Mucosa of descending colon (tissue), 3 donors: ENCODE measurements at regions of chr17 and their contacts with region 1.

Region 1: GRCh38 chr17:62968445-62968923 is 2.4 kb downstream of the TANC2 start:
- DNase-seq: peak in 1 of 3 donors; percentile 64
- ATAC-seq: peak; percentile 80
- H3K4me3 ChIP-seq: no peak overlapping the region
- H3K4me1 ChIP-seq: peaks cover 16% of the 10 kb centered on the region
- CTCF ChIP-seq: peak; percentile 62

Region 2: GRCh38 chr17:62703775-62704378 is 264.6 kb before region 1 on chr17:
- intact Hi-C with region 1: loop called in 1 of 2 experiments (anchors 5 kb)
- DNase-seq: peak; percentile 74 to 86 (median 76)
- ATAC-seq: peak; percentile 95
- H3K4me3 ChIP-seq: no peak overlapping the region
- H3K4me1 ChIP-seq: no peaks in the 10 kb centered on the region
- CTCF ChIP-seq: peak; percentile 74

Region 3: GRCh38 chr17:62714016-62714746 is 254.3 kb before region 1 on chr17:
- intact Hi-C with region 1: loop called in 1 of 2 experiments (anchors 5 kb)
- DNase-seq: no peak
- ATAC-seq: no peak
- H3K4me3 ChIP-seq: no peak overlapping the region
- H3K4me1 ChIP-seq: no peaks in the 10 kb centered on the region
- CTCF ChIP-seq: no peak

Region 4: GRCh38 chr17:63052639-63053038 is 84.2 kb after region 1 on chr17:
- intact Hi-C with region 1: no loop called
- DNase-seq: no peak
- ATAC-seq: no peak
- H3K4me3 ChIP-seq: no peak overlapping the region
- H3K4me1 ChIP-seq: no peaks in the 10 kb centered on the region
- CTCF ChIP-seq: no peak